ENCODE measurements at regions of chr14 and their contacts with region 1.

Region 1: GRCh38 chr14:61456720-61457119 is 135.3 kb downstream of the PRKCH start:
- DNase-seq: peak; percentile 85 to 90 (median 88)
- ATAC-seq: peak; percentile 80
- H3K4me3 ChIP-seq: no peak overlapping the region
- H3K27ac ChIP-seq: no peak overlapping the region
- H3K4me1 ChIP-seq: peaks cover 6% of the 10 kb centered on the region
- H3K27me3 ChIP-seq: no peaks in the 10 kb centered on the region
- CTCF ChIP-seq: peak; percentile 75 to 90 (median 79)
- POLR2A ChIP-seq: no peak

Region 2: DNA sequence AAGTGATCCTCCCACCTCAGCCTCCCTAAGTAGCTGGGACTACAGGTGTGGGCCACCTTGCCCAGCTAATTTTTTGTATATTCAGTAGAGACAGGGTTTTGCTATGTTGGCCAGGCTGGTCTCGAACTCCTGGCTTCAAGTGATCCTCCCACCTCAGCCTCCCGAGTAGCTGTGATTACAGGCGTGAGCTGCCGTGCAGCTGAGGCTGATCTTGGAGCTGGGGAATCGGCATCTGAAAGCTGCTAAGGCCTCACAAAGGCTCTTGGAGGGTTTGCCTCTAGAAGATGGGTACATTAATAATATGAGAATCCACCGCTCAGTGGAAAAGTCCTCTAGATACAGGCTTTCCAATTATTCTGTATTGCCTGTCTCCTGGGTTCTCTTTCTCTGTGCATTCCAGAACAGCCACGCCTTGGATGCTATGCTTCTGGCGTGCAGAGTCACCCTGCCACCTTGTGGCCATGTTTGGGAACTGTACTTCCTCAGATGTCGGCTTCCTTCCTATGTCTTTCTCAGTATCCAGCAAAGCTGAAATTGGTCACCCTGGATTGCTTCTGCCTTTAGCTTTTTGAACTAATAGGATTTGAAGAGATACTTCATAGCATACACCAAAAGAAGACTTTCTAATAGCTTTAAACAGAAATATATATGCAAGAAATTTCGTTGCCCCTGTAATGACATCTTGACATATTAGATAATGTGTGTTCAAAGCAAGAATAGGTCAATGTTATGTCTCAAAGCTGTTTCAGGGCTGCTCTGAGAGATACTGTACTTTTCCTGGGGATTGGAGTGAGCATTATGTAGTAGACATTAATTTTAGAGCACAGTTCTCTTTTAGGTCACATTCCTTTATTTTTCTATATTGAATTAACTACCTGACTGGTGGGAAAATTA is 380.9 kb after region 1 on chr14:
- intact Hi-C with region 1: loop called (anchors 5 kb)
- DNase-seq: peak; percentile 82 to 85 (median 84)
- ATAC-seq: peak; percentile 92
- H3K4me3 ChIP-seq: no peak overlapping the region
- H3K27ac ChIP-seq: no peak overlapping the region
- H3K4me1 ChIP-seq: no peaks in the 10 kb centered on the region
- H3K27me3 ChIP-seq: no peaks in the 10 kb centered on the region
- CTCF ChIP-seq: peak; percentile 83 to 93 (median 90)
- POLR2A ChIP-seq: no peak